GM10248 (cell line): ENCODE measurements at regions of chr2 and their contacts with region 1.

Region 1: DNA sequence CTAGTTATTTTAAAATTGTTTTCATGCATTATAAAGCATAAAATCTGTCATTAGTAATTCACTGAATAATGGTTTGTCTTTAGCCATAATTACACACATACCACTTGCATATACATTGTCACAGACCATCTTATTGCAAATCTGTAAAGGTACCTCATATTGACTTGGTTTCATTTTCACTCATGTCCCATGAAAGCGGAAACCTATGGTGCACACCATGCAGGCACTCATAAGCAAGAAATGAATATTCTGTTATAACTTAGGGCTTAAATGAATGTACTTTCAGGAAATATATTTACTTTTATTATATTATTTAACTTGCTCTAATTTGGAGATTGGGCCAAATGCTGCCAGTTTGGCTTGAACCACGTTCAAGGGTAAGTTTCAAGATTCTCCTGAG is 29.2 kb upstream of the STK17B start:
- DNase-seq: peak; percentile 48
- CTCF ChIP-seq: no peak

Region 2: DNA sequence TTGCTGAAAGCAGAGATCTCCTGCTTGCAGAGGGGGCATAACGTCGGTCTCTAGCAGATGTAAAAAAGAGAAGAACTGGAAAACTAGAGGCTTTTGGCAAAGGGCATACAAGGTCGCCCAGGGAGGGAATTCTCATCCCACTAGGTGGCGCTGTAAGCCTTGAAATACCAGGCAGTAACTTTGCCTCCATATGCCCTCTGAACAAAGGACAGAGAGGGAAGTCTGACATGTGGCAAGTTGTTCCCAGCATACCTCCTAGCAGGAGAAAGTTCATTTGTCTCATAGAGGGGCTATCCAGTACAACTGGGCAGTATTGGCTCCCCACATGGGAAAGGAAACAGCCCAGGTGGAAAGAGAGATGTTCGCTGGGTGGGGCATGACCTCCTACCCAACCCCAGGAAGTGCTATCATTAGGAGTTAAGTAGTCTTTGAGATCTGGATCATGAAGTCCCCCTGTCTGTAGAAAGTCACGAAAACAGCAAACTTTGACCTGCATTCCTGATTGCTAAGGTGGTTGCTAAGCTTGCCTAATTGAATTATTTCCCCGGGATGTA is 69.1 kb before region 1 on chr2:
- CTCF ChIA-PET with region 1: no interaction called
- POLR2A ChIA-PET with region 1: no interaction called
- DNase-seq: no peak
- CTCF ChIP-seq: peak; percentile 22

Region 3: GRCh38 chr2:196176142-196176738 is 24.3 kb before region 1 on chr2:
- CTCF ChIA-PET with region 1: interaction called, 10 read pairs
- POLR2A ChIA-PET with region 1: interaction called, 7 read pairs
- DNase-seq: peak; percentile 64
- CTCF ChIP-seq: no peak